Activated CD4-positive, alpha-beta memory T cell treated with anti-CD3 and anti-CD28 coated beads, Interleukin-2, amount 10 ng/mL, durations not matched to agents 7 days and 5 days (primary cell): ENCODE measurements at regions of chr1 and their contacts with region 1.

Region 1: GRCh38 chr1:172357753-172358385 is 62.6 kb upstream of the C1orf105 start:
- DNase-seq: no peak
- H3K4me3 Mint-ChIP-seq: no peak overlapping the region
- H3K27ac Mint-ChIP-seq: peak overlapping the region; percentile 70
- H3K4me1 Mint-ChIP-seq: peaks cover 50% of the 10 kb centered on the region
- H3K27me3 Mint-ChIP-seq: peaks cover 5% of the 10 kb centered on the region

Region 2: DNA sequence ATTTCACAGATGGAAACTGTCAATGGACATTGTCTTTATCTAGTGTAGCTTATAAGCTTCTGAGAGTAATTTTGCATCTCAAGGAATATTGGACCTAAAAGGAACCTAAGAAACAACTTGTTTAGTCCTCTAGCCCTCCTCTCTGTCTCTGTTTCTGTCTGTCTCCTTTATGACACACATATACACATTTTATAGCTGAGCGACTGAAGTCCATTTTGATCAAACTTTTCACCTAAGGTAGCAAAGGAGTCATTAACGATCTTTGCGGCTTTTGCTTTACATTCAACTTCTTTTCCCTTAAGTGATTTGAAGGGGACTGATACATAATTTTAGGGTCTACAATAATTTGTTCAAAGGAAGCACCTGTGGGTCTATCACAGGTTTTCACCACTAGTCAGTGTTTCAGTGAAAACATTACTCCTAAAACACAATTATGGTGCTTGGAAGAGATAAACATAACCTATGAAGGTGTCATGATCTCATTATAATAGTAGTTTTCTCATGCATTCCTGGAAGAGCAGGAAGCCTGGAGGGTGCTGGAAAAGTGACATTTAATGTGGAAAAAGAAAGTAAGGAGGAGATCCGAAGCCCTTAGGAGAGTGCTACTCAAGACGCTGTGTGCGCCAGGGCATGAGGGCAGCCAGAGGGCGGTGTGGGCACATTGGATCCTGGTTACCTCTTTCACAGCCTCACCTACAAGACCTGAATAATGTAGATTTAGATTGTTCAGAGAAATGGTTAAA is 267.9 kb before region 1 on chr1:
- CTCF ChIA-PET with region 1: interaction called, 11 read pairs
- POLR2A ChIA-PET with region 1: no interaction called
- DNase-seq: peak; percentile 69
- H3K4me3 Mint-ChIP-seq: no peak overlapping the region
- H3K27ac Mint-ChIP-seq: no peak overlapping the region
- H3K4me1 Mint-ChIP-seq: peaks cover 4% of the 10 kb centered on the region
- H3K27me3 Mint-ChIP-seq: no peaks in the 10 kb centered on the region

Region 3: DNA sequence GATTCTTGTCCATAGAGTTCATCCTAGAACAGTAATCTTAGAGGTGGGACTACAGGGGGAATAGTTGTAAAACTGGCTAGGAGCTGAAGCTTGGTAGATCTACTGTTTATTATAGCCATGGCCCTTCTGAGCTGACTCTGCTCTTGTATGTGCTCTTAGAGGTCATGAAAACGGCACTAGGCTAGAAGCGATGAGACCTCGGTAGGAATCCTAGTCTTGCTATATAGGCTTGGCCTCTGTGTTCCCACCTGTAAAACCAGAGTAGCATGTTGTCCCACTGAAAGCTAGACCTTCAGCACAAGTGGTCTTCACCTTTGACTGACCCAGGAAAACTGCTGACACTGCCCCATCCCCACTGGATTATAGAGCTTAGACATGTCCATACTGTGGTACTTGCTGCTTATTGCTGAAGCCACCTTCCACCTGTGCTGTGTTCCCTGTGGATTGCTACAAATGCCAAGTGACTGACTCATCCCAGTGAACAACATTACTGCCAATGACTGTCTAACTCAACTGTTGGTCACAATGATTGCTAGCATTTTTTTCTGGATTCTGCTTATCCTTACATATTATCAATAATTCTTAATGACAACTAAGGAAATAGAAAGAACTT is 109.0 kb after region 1 on chr1:
- CTCF ChIA-PET with region 1: no interaction called
- POLR2A ChIA-PET with region 1: no interaction called
- DNase-seq: no peak
- H3K4me3 Mint-ChIP-seq: no peak overlapping the region
- H3K27ac Mint-ChIP-seq: no peak overlapping the region
- H3K4me1 Mint-ChIP-seq: peaks cover 2% of the 10 kb centered on the region
- H3K27me3 Mint-ChIP-seq: peaks cover 2% of the 10 kb centered on the region

Region 4: GRCh38 chr1:172532700-172533509 is 175.0 kb after region 1 on chr1 and contains the start of gene SUCO:
- CTCF ChIA-PET with region 1: no interaction called
- POLR2A ChIA-PET with region 1: no interaction called
- DNase-seq: peak; percentile 100
- H3K4me3 Mint-ChIP-seq: peak within 1 kb of the TSS; percentile 97
- H3K27ac Mint-ChIP-seq: peak within 1 kb of the TSS; percentile 98
- H3K4me1 Mint-ChIP-seq: peaks cover 49% of the 10 kb centered on the region
- H3K27me3 Mint-ChIP-seq: peaks cover 8% of the 10 kb centered on the region
- total RNA-seq, gene SUCO: 27.3 to 30.8 TPM

Region 5: DNA sequence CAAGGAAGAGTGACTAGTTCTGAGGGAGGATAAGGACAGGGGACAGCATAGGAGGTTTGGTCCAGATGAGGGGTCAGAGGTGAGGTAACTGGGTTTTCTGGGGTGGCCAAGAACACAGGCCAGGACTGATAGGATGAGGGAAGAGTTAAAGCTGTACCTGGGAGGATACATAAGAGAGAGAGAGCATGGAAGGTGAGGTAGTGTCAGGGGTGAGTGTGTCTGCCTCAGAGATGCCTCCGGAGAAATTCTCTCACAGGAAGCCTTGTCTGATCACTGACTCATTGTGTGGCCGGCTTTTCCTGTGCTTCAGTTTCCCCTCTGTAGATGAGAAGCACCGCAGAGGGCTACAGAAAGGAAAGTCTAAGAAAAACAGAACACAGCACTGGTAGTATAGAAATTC is 341.2 kb after region 1 on chr1:
- CTCF ChIA-PET with region 1: no interaction called
- POLR2A ChIA-PET with region 1: no interaction called
- DNase-seq: peak; percentile 82
- H3K4me3 Mint-ChIP-seq: peak overlapping the region; percentile 18
- H3K27ac Mint-ChIP-seq: peak overlapping the region; percentile 94
- H3K4me1 Mint-ChIP-seq: peaks cover 47% of the 10 kb centered on the region
- H3K27me3 Mint-ChIP-seq: peaks cover 2% of the 10 kb centered on the region